A549 (cell line): ENCODE measurements at regions of chr10 and their contacts with region 1.

Region 1: GRCh38 chr10:21135023-21135931 is 238.2 kb upstream of the NEBL start:
- DNase-seq: peak; percentile 60 to 81
- ATAC-seq: peak; percentile 97 to 98
- H3K4me3 ChIP-seq: peak overlapping the region; percentile 17; the same call in 1 of the 3 replicates
- H3K27ac ChIP-seq: peak overlapping the region; percentile 91 to 92
- H3K4me1 ChIP-seq: peaks cover 49% of the 10 kb centered on the region
- CTCF ChIP-seq: no peak
- EP300 ChIP-seq: peak; percentile 36 to 44; a peak in 2 of 5 replicates
- POLR2A ChIP-seq: no peak
- RAD21 ChIP-seq: peak in 1 of 2 experiments; percentile 22; a peak in 2 of 5 replicates

Region 2: GRCh38 chr10:21097926-21098355 is 37.3 kb before region 1 on chr10:
- CTCF ChIA-PET with region 1: no interaction called
- POLR2A ChIA-PET with region 1: interaction called, 10 read pairs
- DNase-seq: no peak
- ATAC-seq: 0 out of 6 replicates have a peak, but pooled peaks of 1 of the 2 experiments have one; percentile 26
- H3K4me3 ChIP-seq: no peak overlapping the region
- H3K27ac ChIP-seq: peak overlapping the region; percentile 80 to 81
- H3K4me1 ChIP-seq: peaks cover 41% of the 10 kb centered on the region
- CTCF ChIP-seq: no peak
- EP300 ChIP-seq: no peak
- POLR2A ChIP-seq: no peak
- RAD21 ChIP-seq: no peak

Region 3: DNA sequence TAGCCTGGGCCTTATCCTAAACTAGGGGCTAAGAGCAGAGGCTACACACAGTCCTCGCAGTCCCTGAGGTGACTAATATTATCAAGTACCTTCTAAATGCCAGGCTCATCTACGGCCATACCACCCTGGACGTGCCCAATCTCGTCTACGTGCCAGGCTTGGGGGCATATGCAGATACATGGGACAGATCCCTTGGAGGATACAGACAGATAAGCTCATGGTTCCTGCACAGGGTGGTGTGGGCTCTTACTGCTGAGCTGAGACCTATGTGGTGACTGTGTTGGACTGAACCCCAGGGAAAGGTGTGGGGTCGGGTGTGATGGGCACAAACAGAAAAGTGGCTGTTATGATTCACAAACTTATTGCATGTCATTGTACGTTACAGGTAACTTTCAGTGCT is 30.2 kb after region 1 on chr10:
- CTCF ChIA-PET with region 1: no interaction called
- POLR2A ChIA-PET with region 1: no interaction called
- DNase-seq: no peak
- ATAC-seq: peak; percentile 48 to 54; a peak in 3 of 6 replicates
- H3K4me3 ChIP-seq: no peak overlapping the region
- H3K27ac ChIP-seq: 0 out of 6 replicates have a peak overlapping the region, but pooled peaks of 1 of the 2 experiments have one; percentile 3
- H3K4me1 ChIP-seq: peaks cover 34% of the 10 kb centered on the region
- CTCF ChIP-seq: no peak
- EP300 ChIP-seq: no peak
- POLR2A ChIP-seq: no peak
- RAD21 ChIP-seq: no peak

Region 4: DNA sequence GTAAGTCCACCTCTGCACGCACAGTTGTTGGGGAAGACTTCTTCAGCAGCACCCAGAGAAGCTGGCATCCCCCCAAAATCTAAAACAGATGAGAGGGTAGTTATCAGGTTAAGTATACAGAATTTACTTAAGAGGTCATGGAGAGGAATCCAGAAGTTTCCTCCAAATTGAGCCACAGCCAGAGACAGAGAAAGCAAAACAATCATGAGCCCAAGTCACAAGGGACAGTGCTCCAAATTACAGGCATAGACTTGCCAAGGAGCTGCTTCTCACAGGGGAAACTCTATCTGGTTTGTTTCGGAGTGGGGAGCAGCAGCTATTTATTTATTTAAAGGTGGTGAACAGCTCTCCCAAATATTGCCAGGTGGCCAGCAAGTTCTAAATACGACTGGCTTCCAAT is 81.8 kb after region 1 on chr10:
- CTCF ChIA-PET with region 1: no interaction called
- POLR2A ChIA-PET with region 1: no interaction called
- DNase-seq: no peak
- ATAC-seq: no peak
- H3K4me3 ChIP-seq: no peak overlapping the region
- H3K27ac ChIP-seq: no peak overlapping the region
- H3K4me1 ChIP-seq: no peaks in the 10 kb centered on the region
- CTCF ChIP-seq: no peak
- EP300 ChIP-seq: no peak
- POLR2A ChIP-seq: no peak
- RAD21 ChIP-seq: no peak